Heart left ventricle (tissue), 16 donors: ENCODE measurements at regions of chr1 and their contacts with region 1.

Region 1: GRCh38 chr1:35499652-35500176 is 57.5 kb downstream of the KIAA0319L start:
- DNase-seq: no peak
- ATAC-seq: peak in 3 of 4 donors; percentile 41 to 51 (median 49)
- H3K4me3 ChIP-seq: no peak overlapping the region
- H3K27ac ChIP-seq: peak overlapping the region in 1 of 12 donors; percentile 15
- H3K4me1 ChIP-seq: peaks cover 0 to 24% (median 9%) of the 10 kb centered on the region in 12 donors
- H3K27me3 ChIP-seq: no peaks in the 10 kb centered on the region
- CTCF ChIP-seq: no peak
- POLR2A ChIP-seq: no peak

Region 2: GRCh38 chr1:35544978-35545377 is 45.3 kb after region 1 on chr1:
- intact Hi-C with region 1: loop called in 1 of 10 experiments (anchors 5 kb)
- DNase-seq: peak in 3 of 5 donors; percentile 63 to 79 (median 71)
- ATAC-seq: peak; percentile 70 to 92 (median 88)
- H3K4me3 ChIP-seq: no peak overlapping the region
- H3K27ac ChIP-seq: peak overlapping the region in 6 of 12 donors; percentile 10 to 56 (median 44)
- H3K4me1 ChIP-seq: peaks cover 2 to 55% (median 43%) of the 10 kb centered on the region in 12 donors
- H3K27me3 ChIP-seq: no peaks in the 10 kb centered on the region
- CTCF ChIP-seq: peak in 11 of 12 donors; percentile 15 to 60 (median 38)
- POLR2A ChIP-seq: no peak